ENCODE measurements at regions of chr1 and their contacts with region 1.

Region 1: GRCh38 chr1:117059678-117060440 is at the start of gene TTF2:
- DNase-seq: peak; percentile 88 to 99 (median 93)
- ATAC-seq: peak; percentile 90
- H3K4me3 ChIP-seq: peak within 1 kb of the TSS; percentile 91
- H3K4me3 Mint-ChIP-seq: no peak within 1 kb of the TSS
- H3K27ac ChIP-seq: peak within 1 kb of the TSS; percentile 71 to 87
- H3K27ac Mint-ChIP-seq: no peak within 1 kb of the TSS
- H3K4me1 ChIP-seq: peaks cover 18% of the 10 kb centered on the region
- H3K4me1 Mint-ChIP-seq: peaks cover 46% of the 10 kb centered on the region
- H3K27me3 ChIP-seq: no peaks in the 10 kb centered on the region
- H3K27me3 Mint-ChIP-seq: no peaks in the 10 kb centered on the region
- CTCF ChIP-seq: peak; percentile 31
- total RNA-seq, gene TTF2: 35.4 to 36.6 TPM

Region 2: GRCh38 chr1:116754198-116754977 is 305.5 kb before region 1 on chr1 and contains the start of gene CD2:
- CTCF ChIA-PET with region 1: no interaction called
- POLR2A ChIA-PET with region 1: interaction called, 23 read pairs
- intact Hi-C with region 1: no loop called
- DNase-seq: peak in 11 of 14 experiments; percentile 47 to 82 (median 60)
- ATAC-seq: peak; percentile 86
- H3K4me3 ChIP-seq: peak within 1 kb of the TSS; percentile 78
- H3K4me3 Mint-ChIP-seq: peak within 1 kb of the TSS; percentile 97
- H3K27ac ChIP-seq: peak within 1 kb of the TSS; percentile 81 to 82
- H3K27ac Mint-ChIP-seq: peak within 1 kb of the TSS; percentile 99
- H3K4me1 ChIP-seq: peaks cover 19% of the 10 kb centered on the region
- H3K4me1 Mint-ChIP-seq: peaks cover 59% of the 10 kb centered on the region
- H3K27me3 ChIP-seq: no peaks in the 10 kb centered on the region
- H3K27me3 Mint-ChIP-seq: no peaks in the 10 kb centered on the region
- CTCF ChIP-seq: peak; percentile 13
- total RNA-seq, gene CD2: 150 to 151 TPM

Region 3: GRCh38 chr1:116817582-116818064 is 242.2 kb before region 1 on chr1:
- CTCF ChIA-PET with region 1: interaction called, 5 read pairs
- POLR2A ChIA-PET with region 1: interaction called, 6 read pairs
- intact Hi-C with region 1: loop called (anchors 1 to 2 kb)
- DNase-seq: peak; percentile 50 to 89 (median 70)
- ATAC-seq: peak; percentile 63
- H3K4me3 ChIP-seq: no peak overlapping the region
- H3K4me3 Mint-ChIP-seq: peak overlapping the region; percentile 68
- H3K27ac ChIP-seq: no peak overlapping the region
- H3K27ac Mint-ChIP-seq: peak overlapping the region; percentile 95
- H3K4me1 ChIP-seq: peaks cover 23% of the 10 kb centered on the region
- H3K4me1 Mint-ChIP-seq: peaks cover 38% of the 10 kb centered on the region
- H3K27me3 ChIP-seq: no peaks in the 10 kb centered on the region
- H3K27me3 Mint-ChIP-seq: no peaks in the 10 kb centered on the region
- CTCF ChIP-seq: peak; percentile 94

Region 4: DNA sequence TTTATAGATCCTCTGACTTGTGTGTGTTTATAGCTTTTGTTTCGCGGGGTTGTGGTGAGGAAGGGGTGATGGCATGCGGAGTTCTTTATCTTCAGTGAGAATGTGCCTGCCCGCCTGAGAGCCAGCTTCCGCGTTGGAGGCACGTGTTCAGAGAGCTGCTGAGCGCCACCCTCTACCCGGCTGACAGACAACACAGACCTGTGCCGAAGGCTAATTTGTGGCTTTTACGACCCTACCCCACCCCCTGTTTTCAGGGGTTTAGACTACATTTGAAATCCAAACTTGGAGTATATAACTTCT is 72.7 kb before region 1 on chr1:
- CTCF ChIA-PET with region 1: interaction called, 4 read pairs
- POLR2A ChIA-PET with region 1: interaction called, 45 read pairs
- intact Hi-C with region 1: loop called in 1 of 2 experiments (anchors 2 kb)
- DNase-seq: peak; percentile 57 to 87 (median 73)
- ATAC-seq: peak; percentile 93
- H3K4me3 ChIP-seq: peak overlapping the region; percentile 54
- H3K4me3 Mint-ChIP-seq: peak overlapping the region; percentile 78
- H3K27ac ChIP-seq: peak overlapping the region; percentile 42 to 72
- H3K27ac Mint-ChIP-seq: peak overlapping the region; percentile 91
- H3K4me1 ChIP-seq: peaks cover 49% of the 10 kb centered on the region
- H3K4me1 Mint-ChIP-seq: peaks cover 70% of the 10 kb centered on the region
- H3K27me3 ChIP-seq: no peaks in the 10 kb centered on the region
- H3K27me3 Mint-ChIP-seq: no peaks in the 10 kb centered on the region
- CTCF ChIP-seq: no peak

Region 5: GRCh38 chr1:117020526-117021156 is 39.2 kb before region 1 on chr1:
- CTCF ChIA-PET with region 1: no interaction called
- POLR2A ChIA-PET with region 1: no interaction called
- intact Hi-C with region 1: no loop called
- DNase-seq: no peak
- ATAC-seq: no peak
- H3K4me3 ChIP-seq: no peak overlapping the region
- H3K4me3 Mint-ChIP-seq: no peak overlapping the region
- H3K27ac ChIP-seq: no peak overlapping the region
- H3K27ac Mint-ChIP-seq: no peak overlapping the region
- H3K4me1 ChIP-seq: peaks cover 9% of the 10 kb centered on the region
- H3K4me1 Mint-ChIP-seq: peaks cover 32% of the 10 kb centered on the region
- H3K27me3 ChIP-seq: no peaks in the 10 kb centered on the region
- H3K27me3 Mint-ChIP-seq: no peaks in the 10 kb centered on the region
- CTCF ChIP-seq: no peak

Region 6: GRCh38 chr1:117036018-117036461 is 23.8 kb before region 1 on chr1:
- CTCF ChIA-PET with region 1: no interaction called
- POLR2A ChIA-PET with region 1: no interaction called
- intact Hi-C with region 1: no loop called
- DNase-seq: no peak
- ATAC-seq: no peak
- H3K4me3 ChIP-seq: no peak overlapping the region
- H3K4me3 Mint-ChIP-seq: no peak overlapping the region
- H3K27ac ChIP-seq: no peak overlapping the region
- H3K27ac Mint-ChIP-seq: no peak overlapping the region
- H3K4me1 ChIP-seq: peaks cover 5% of the 10 kb centered on the region
- H3K4me1 Mint-ChIP-seq: peaks cover 18% of the 10 kb centered on the region
- H3K27me3 ChIP-seq: no peaks in the 10 kb centered on the region
- H3K27me3 Mint-ChIP-seq: no peaks in the 10 kb centered on the region
- CTCF ChIP-seq: no peak

Region 7: GRCh38 chr1:117367047-117368018 is 307.5 kb after region 1 on chr1 and contains the start of gene MAN1A2:
- CTCF ChIA-PET with region 1: no interaction called
- POLR2A ChIA-PET with region 1: interaction called, 11 read pairs
- intact Hi-C with region 1: no loop called
- DNase-seq: peak; percentile 47 to 87 (median 70)
- ATAC-seq: peak; percentile 62
- H3K4me3 ChIP-seq: peak within 1 kb of the TSS; percentile 69
- H3K4me3 Mint-ChIP-seq: peak within 1 kb of the TSS; percentile 97
- H3K27ac ChIP-seq: peak within 1 kb of the TSS; percentile 64 to 83
- H3K27ac Mint-ChIP-seq: peak within 1 kb of the TSS; percentile 98
- H3K4me1 ChIP-seq: peaks cover 35% of the 10 kb centered on the region
- H3K4me1 Mint-ChIP-seq: peaks cover 87% of the 10 kb centered on the region
- H3K27me3 ChIP-seq: no peaks in the 10 kb centered on the region
- H3K27me3 Mint-ChIP-seq: no peaks in the 10 kb centered on the region
- CTCF ChIP-seq: no peak
- total RNA-seq, gene MAN1A2: 45.6 to 49.7 TPM